Activated T-helper 2 cell treated with anti-CD3 and anti-CD28 coated beads, Interferon-gamma antibody, Interleukin-2, Interleukin-4, amounts not matched to agents 10 μg/mL and 5 μg/mL and 100 μg/mL, durations not matched to agents 14 hours and 24 hours and 36 hours (primary cell): ENCODE measurements at regions of chr3 and their contacts with region 1.

Region 1: GRCh38 chr3:141243271-141243707 is 11.7 kb downstream of the PXYLP1 start:
- DNase-seq: peak; percentile 61
- H3K4me3 Mint-ChIP-seq: peak overlapping the region; percentile 32
- H3K27ac Mint-ChIP-seq: peak overlapping the region; percentile 87
- H3K4me1 Mint-ChIP-seq: peaks cover 60% of the 10 kb centered on the region
- H3K27me3 Mint-ChIP-seq: no peaks in the 10 kb centered on the region

Region 2: GRCh38 chr3:140770988-140771667 is 472.2 kb before region 1 on chr3:
- intact Hi-C with region 1: no loop called
- DNase-seq: no peak
- H3K4me3 Mint-ChIP-seq: no peak overlapping the region
- H3K27ac Mint-ChIP-seq: no peak overlapping the region
- H3K4me1 Mint-ChIP-seq: no peaks in the 10 kb centered on the region
- H3K27me3 Mint-ChIP-seq: peaks cover 9% of the 10 kb centered on the region

Region 3: GRCh38 chr3:140922634-140923033 is 320.7 kb before region 1 on chr3:
- intact Hi-C with region 1: no loop called
- DNase-seq: no peak
- H3K4me3 Mint-ChIP-seq: no peak overlapping the region
- H3K27ac Mint-ChIP-seq: no peak overlapping the region
- H3K4me1 Mint-ChIP-seq: no peaks in the 10 kb centered on the region
- H3K27me3 Mint-ChIP-seq: peaks cover 30% of the 10 kb centered on the region

Region 4: DNA sequence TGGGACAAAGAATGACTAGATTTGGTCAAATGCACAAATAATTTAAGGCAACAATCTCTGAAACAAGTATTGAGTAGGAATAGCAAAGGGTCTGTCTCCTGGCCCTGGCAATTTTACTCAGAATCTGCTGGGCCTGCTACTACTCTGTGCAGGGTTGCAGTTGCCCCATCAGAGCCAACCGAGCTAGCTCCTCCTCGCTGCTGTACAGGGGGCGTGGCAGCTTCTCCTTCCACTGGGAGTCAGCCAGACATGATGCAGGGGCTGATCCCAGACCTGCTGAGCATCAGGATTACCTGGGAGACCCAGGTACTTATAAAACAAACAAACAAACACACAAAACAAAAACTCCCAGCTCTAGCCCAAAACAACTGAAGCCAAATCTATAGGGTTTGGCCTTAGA is 42.2 kb before region 1 on chr3:
- intact Hi-C with region 1: no loop called
- DNase-seq: no peak
- H3K4me3 Mint-ChIP-seq: no peak overlapping the region
- H3K27ac Mint-ChIP-seq: no peak overlapping the region
- H3K4me1 Mint-ChIP-seq: no peaks in the 10 kb centered on the region
- H3K27me3 Mint-ChIP-seq: peaks cover 70% of the 10 kb centered on the region

Region 5: GRCh38 chr3:141255846-141256261 is 12.6 kb after region 1 on chr3:
- intact Hi-C with region 1: loop called (anchors 1 kb)
- DNase-seq: peak; percentile 42
- H3K4me3 Mint-ChIP-seq: no peak overlapping the region
- H3K27ac Mint-ChIP-seq: peak overlapping the region; percentile 57
- H3K4me1 Mint-ChIP-seq: peaks cover 68% of the 10 kb centered on the region
- H3K27me3 Mint-ChIP-seq: no peaks in the 10 kb centered on the region